GM10248 (cell line): ENCODE measurements at regions of chr19 and their contacts with region 1.

Region 1: DNA sequence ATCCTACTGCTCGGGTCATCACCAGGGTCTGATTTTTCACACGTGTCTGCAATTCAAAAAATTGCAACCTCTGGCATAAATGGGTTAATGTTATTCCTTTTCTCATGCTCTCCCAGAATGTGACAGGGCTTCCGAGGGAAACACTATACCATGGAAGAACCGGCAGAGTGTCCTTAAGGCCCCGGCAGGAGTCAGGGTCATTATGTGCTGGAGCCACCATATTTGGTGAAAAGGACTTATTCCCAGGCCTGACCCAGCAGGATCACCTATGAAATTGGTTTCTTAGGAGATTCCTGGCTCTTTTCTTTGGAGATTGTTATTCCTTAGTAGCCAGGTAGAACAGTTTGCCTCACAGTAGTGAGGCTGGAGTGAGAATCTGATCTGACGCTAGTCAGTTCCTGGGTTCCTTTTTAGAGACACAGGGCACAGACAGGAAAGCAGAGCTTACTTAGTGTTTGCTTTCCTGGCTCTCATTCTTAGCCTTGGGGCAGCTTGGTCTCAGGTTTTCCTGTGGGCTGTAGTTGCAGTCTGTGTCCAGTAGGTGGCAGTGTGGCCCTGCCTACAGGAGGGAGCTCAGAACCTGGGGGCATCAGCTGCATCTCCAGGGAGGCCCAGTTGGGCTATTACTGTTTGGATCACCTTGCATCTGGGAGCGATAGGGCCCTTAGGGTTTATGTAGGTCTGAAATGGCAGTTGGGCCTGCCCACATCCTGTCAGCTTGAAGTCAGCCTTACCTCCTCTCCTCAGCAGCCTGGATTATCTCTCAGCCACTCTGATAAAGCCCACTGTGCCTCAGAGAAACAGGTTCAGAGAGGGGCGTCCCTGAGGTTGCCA is 12.4 kb downstream of the SNRNP70 start:
- DNase-seq: peak; percentile 82
- CTCF ChIP-seq: peak; percentile 97

Region 2: GRCh38 chr19:48993175-48994034 is 104.3 kb before region 1 on chr19 and contains the starts of genes GYS1 and RUVBL2:
- CTCF ChIA-PET with region 1: interaction called, 14 read pairs
- POLR2A ChIA-PET with region 1: no interaction called
- DNase-seq: peak; percentile 99
- CTCF ChIP-seq: peak; percentile 91

Region 3: GRCh38 chr19:49073514-49074378 is 23.9 kb before region 1 on chr19:
- CTCF ChIA-PET with region 1: interaction called, 13 read pairs
- POLR2A ChIA-PET with region 1: no interaction called
- DNase-seq: no peak
- CTCF ChIP-seq: peak; percentile 12

Region 4: DNA sequence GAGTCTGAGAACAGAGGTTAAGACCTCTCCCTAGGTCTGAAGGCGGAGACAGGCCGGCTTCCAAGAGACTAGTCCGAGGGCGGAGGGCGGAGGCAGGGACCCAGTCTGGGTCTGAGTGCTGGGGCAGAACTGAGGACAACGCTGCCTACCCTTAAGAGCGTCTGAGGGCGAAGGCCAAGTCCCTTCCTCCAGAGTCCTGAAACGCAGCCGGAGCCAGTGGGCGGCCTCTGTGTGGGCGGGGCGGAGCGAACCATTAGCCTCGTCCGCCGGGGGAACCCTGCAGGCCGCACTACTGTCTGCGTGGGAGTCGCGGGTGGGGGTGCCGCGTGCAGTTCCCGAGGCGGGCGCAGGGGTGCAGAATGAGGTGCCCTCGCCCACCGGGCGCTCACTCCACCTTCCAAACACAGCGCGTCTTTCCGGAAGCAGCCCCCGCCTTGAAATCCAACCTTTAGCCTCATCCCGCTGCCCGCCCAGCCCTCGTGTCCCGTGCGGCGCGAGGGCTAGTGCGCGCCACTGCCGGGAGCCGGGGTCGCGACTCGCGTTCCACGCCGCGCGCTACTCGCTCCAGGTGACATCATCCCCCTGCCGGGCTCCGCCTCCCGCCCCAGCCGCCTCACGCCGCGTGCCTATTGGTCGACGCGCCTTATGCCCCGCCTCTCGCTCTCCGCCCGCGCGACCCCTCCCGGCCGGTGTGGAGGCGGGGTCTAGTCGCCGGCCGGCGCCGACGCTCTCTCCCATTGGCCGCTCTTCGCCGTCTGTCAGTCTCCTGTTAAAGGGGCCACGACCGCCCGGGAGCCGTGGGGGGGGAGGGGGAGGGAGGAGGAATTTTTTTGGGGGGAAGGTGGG is 21.1 kb after region 1 on chr19 and contains the start of gene C19orf73:
- CTCF ChIA-PET with region 1: interaction called, 37 read pairs
- POLR2A ChIA-PET with region 1: interaction called, 6 read pairs
- DNase-seq: peak; percentile 99
- CTCF ChIP-seq: no peak

Region 5: DNA sequence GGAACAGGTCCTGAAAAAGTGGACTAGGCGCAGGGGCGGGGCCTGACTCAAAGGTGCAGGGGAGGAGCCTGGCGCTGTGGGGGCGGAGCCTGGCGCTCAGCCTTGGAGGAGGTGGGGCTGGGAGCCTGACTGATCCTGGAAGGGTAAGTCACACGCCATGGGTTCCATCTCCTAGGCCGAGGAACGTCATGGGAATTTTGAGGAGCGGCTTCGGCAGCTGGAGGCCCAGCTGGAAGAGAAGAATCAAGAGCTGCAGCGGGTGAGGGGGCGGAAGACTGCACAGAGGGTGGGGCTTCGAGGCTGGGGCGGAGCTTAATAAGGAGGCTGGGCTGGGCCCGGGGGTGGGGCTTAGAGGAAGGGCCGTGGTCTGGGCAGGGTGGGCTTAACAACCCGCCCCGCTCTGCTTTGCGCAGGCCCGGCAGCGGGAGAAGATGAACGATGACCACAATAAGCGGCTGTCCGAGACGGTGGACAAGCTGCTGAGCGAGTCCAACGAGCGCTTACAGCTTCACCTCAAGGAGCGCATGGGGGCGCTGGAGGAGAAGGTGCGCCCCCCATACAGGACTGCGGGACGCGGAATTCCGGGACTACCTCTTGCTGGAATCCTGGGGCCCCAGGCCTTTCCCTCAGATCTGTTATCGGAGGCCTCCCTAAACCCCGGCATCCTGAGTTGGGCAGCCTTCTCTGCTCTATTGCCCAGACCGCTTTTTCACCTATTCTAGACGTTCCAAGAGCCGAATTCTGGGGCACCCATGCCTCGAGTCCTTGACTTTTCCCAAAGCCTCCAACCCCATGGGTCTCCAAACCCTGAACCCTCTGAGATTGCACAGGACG is 36.2 kb after region 1 on chr19:
- CTCF ChIA-PET with region 1: interaction called, 18 read pairs
- POLR2A ChIA-PET with region 1: no interaction called
- DNase-seq: no peak
- CTCF ChIP-seq: no peak

Region 6: DNA sequence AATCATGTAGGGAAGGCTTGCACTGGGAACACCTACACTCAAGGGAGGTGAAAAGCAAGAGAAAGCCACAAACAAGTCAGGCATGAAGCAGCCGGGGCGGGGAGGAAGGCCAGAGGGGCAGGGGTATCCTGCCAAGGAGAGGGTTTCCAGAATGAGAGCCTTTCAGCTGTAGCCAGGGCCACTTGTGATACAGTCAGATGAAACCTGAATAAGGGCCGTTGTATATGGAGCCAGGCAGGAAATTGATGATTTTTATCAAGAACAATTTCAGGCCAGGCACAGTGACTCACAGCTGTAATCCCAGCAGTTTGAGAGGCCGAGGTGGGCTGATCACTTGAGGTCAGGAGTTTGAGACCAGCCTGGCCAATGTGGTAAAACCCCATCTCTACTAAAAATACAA is 64.3 kb after region 1 on chr19:
- CTCF ChIA-PET with region 1: interaction called, 10 read pairs
- POLR2A ChIA-PET with region 1: no interaction called
- DNase-seq: no peak
- CTCF ChIP-seq: no peak

Region 7: DNA sequence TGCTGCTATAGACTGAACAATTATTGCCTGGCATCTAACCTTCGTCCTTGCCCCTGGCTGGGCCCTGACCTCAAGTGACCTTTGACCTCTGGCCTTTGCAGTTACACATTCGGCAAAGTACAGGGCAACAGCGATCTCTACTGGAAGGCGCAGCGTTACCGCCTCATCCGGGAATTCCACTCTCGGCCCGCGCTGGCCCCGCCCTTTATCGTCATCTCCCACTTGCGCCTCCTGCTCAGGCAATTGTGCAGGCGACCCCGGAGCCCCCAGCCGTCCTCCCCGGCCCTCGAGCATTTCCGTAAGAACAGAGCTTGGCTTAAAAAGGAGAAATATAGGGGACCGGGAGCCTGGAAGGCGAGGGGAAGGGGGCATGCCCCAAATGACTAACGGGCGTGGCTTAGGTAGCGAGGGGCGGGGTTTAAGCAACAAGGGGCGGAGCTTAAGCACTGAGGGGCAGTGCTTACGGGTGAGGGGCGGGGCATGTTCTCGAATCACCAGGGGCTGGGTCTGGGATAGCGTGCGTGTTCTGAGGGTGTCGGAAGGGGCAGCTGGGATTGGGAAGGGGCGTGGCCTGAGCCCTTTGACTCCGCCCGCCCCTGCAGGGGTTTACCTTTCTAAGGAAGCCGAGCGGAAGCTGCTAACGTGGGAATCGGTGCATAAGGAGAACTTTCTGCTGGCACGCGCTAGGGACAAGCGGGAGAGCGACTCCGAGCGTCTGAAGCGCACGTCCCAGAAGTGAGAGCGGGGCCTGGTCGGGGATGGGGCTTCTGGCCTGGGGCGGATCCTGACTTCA is 112.6 kb after region 1 on chr19:
- CTCF ChIA-PET with region 1: interaction called, 31 read pairs
- POLR2A ChIA-PET with region 1: interaction called, 7 read pairs
- DNase-seq: no peak
- CTCF ChIP-seq: no peak